ENCODE measurements at regions of chr21 and their contacts with region 1.

Region 1: DNA sequence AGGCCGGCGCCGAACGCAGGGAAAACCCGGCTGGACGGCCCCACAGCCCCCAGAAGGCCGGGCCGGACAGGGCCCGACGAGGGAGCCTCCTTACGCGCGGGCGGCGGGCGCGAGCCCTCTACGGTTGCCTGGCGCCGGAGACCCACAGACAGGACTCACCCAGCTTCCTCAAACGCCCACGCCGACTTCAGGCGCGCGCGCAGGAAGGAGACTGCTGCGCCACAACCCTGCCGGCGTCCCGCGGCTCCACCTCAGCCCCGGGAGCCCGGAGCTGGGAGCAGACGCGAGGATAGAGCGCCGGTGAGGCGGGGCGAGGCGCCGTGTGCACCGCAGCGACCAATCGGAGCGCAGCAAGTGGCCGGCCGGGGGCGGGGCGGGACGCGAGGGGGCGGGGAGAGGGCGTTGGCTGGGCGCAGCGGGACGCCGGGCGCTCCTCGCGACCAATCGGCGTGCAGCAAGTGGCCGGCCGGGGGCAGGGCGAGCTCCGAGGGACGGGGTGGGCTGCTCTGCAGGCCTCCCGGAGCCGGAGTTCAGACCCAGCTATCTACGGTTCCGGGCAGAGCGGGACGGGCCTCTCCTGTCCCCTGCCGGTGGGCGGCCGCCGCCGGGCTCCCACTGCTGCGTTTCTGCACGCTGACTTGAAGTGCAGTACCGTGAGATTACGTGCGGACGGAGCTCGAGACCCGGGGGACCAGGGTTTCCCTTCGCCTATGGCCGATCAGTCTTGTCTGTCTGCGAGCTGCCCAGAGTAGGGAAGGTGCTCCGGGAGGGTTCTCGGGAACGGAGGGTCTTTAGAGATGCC is at the start of gene TMEM50B:
- H3K4me3 Mint-ChIP-seq: peak within 1 kb of the TSS; percentile 86
- H3K27ac Mint-ChIP-seq: peak within 1 kb of the TSS; percentile 98
- H3K4me1 Mint-ChIP-seq: peaks cover 24% of the 10 kb centered on the region
- H3K27me3 Mint-ChIP-seq: no peaks in the 10 kb centered on the region

Region 2: GRCh38 chr21:33428669-33429068 is 51.2 kb before region 1 on chr21:
- intact Hi-C with region 1: no loop called
- H3K4me3 Mint-ChIP-seq: no peak overlapping the region
- H3K27ac Mint-ChIP-seq: peak overlapping the region; percentile 48
- H3K4me1 Mint-ChIP-seq: peaks cover 67% of the 10 kb centered on the region
- H3K27me3 Mint-ChIP-seq: no peaks in the 10 kb centered on the region

Region 3: DNA sequence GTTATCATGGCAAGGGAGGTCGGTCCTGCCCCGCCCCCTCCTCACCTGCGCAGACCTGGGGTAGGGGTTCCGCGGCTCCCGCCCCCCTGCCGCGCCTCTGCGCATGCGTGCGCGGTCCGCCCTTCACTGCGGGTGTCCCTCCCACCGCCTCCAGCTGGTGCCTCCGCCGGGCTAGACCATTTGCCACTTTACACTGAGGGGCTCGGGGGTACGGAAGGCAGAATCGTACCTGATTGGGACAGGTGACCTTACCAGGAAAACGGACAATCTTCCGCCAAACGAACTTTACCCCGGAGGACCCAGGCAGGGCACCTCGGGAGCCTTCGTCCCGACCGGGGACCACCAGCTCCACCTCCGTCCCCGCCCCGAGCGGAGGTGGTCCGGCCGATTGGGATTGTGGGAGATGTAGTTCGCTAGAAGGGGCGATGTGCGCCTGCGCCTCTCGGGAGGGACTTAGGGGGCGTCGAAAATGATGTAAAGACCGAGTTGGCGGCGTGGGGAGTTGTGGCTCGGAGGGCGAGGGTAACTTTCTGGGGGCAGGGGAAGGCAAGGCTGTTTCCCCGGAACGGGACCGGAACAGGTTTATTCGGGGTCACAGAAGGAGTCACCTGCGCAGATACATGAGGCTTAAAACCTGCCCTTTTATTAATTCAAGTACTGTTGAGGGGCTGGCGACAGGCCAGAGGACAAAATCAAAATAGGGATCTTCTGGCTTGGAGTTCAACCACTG is 11.7 kb after region 1 on chr21 and contains the start of gene DNAJC28:
- intact Hi-C with region 1: loop called (anchors 1 kb)
- H3K4me3 Mint-ChIP-seq: peak within 1 kb of the TSS; percentile 82
- H3K27ac Mint-ChIP-seq: peak within 1 kb of the TSS; percentile 90
- H3K4me1 Mint-ChIP-seq: no peaks in the 10 kb centered on the region
- H3K27me3 Mint-ChIP-seq: peaks cover 2% of the 10 kb centered on the region

Measured in dendritic cell treated with granulocyte-macrophage colony-stimulating factor and Interleukin-4, amounts not matched to agents 40 ng/mL and 50 ng/mL, for 4 days (primary cell).